ENCODE measurements at regions of chr19 and their contacts with region 1.

Region 1: GRCh38 chr19:14689598-14690503 is at the start of gene ZNF333:
- DNase-seq: peak; percentile 93
- ATAC-seq: peak; percentile 88
- H3K4me3 Mint-ChIP-seq: peak within 1 kb of the TSS; percentile 97
- H3K27ac Mint-ChIP-seq: peak within 1 kb of the TSS; percentile 100
- H3K4me1 Mint-ChIP-seq: peaks cover 45% of the 10 kb centered on the region
- H3K27me3 Mint-ChIP-seq: no peaks in the 10 kb centered on the region
- CTCF ChIP-seq: no peak
- total RNA-seq, gene ZNF333: 24.0 and 26.2 TPM in 2 replicates

Region 2: GRCh38 chr19:14529254-14530004 is 160.4 kb before region 1 on chr19 and contains the start of gene TECR:
- CTCF ChIA-PET with region 1: no interaction called
- POLR2A ChIA-PET with region 1: no interaction called
- intact Hi-C with region 1: loop called (anchors 1 kb)
- DNase-seq: peak; percentile 99
- ATAC-seq: peak; percentile 96
- H3K4me3 Mint-ChIP-seq: peak within 1 kb of the TSS; percentile 95
- H3K27ac Mint-ChIP-seq: peak within 1 kb of the TSS; percentile 96
- H3K4me1 Mint-ChIP-seq: peaks cover 31% of the 10 kb centered on the region
- H3K27me3 Mint-ChIP-seq: no peaks in the 10 kb centered on the region
- CTCF ChIP-seq: no peak
- total RNA-seq, gene TECR: 55.3 and 58.6 TPM in 2 replicates

Region 3: DNA sequence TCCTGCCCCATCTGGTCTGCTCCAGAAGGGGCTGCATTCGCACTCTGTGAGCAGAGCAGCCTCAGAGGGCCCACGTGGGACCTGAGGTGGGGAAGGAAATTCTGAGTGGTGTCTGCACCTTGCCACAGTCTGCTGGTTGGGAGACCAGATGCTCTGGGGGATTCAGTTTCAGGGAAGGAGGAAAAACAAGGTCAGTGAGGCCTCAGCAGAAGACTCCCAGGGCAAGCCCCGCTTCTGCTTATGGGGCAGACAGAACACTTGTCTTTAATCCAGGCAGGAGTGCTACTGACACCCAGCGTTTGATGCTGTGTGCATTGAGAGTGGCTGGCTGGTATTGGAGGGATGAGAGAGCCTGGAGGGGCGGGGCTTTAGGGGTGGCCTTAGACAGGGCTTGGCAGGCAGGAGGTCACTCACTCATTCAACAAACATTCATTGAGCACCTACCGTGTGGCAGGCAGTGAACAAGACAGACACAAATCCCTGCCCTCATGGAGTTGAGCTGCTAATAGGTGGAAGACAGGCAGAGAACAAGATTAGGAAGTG is 111.9 kb before region 1 on chr19:
- CTCF ChIA-PET with region 1: interaction called, 510 read pairs
- POLR2A ChIA-PET with region 1: interaction called, 208 read pairs
- intact Hi-C with region 1: loop called (anchors 1 kb)
- DNase-seq: peak; percentile 52
- ATAC-seq: peak; percentile 59
- H3K4me3 Mint-ChIP-seq: peak overlapping the region; percentile 71
- H3K27ac Mint-ChIP-seq: peak overlapping the region; percentile 75
- H3K4me1 Mint-ChIP-seq: peaks cover 78% of the 10 kb centered on the region
- H3K27me3 Mint-ChIP-seq: no peaks in the 10 kb centered on the region
- CTCF ChIP-seq: no peak

Region 4: DNA sequence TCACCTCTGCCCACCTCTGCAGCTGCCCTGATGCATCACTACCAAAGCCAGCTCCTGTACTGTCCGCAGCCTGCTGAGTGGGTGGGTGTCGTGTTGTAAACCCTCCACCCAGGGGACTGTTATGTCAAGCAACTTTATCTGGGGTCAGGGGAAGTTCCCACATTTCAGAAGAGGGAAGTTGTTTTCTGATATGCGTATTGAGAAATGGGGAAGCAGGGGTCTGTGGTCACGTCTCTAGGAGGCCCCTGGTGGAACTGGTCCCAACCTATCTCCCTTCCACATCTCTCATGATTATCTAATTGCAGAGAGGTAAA is 75.8 kb before region 1 on chr19:
- CTCF ChIA-PET with region 1: interaction called, 19 read pairs
- POLR2A ChIA-PET with region 1: interaction called, 24 read pairs
- intact Hi-C with region 1: loop called (anchors 2 kb)
- DNase-seq: no peak
- ATAC-seq: peak; percentile 91
- H3K4me3 Mint-ChIP-seq: peak overlapping the region; percentile 80
- H3K27ac Mint-ChIP-seq: peak overlapping the region; percentile 98
- H3K4me1 Mint-ChIP-seq: peaks cover 61% of the 10 kb centered on the region
- H3K27me3 Mint-ChIP-seq: no peaks in the 10 kb centered on the region
- CTCF ChIP-seq: no peak

Region 5: GRCh38 chr19:15125232-15126067 is 435.6 kb after region 1 on chr19:
- CTCF ChIA-PET with region 1: no interaction called
- POLR2A ChIA-PET with region 1: no interaction called
- intact Hi-C with region 1: loop called (anchors 1 kb)
- DNase-seq: peak; percentile 96
- ATAC-seq: peak; percentile 88
- H3K4me3 Mint-ChIP-seq: peak overlapping the region; percentile 95
- H3K27ac Mint-ChIP-seq: peak overlapping the region; percentile 91
- H3K4me1 Mint-ChIP-seq: peaks cover 17% of the 10 kb centered on the region
- H3K27me3 Mint-ChIP-seq: peaks cover 4% of the 10 kb centered on the region
- CTCF ChIP-seq: no peak

Measured in activated B cell treated with CpG ODN at 0.5 μM for 24 hours (primary cell).